PC-9 (cell line): ENCODE measurements at regions of chr9 and their contacts with region 1.

Region 1: DNA sequence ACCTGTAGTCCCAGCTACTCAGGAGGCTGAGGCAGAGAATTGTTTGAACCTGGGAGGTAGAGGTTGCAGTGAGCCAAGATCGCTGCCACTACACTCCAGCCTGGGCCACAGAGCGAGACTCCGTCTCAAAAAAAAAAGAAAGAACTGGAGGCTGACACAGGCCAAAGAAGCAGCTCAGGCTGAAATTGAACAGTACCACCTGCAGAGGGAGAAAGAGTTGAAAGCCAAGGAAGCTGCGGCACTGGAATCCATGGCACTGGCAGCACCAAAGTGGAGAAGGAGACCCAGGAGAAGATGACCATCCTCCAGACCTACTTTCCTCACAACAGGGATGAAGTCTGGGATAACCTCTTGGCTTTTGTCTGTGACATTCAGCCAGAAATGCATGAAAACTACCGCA is 11.3 kb upstream of the TMEM141 start:
- DNase-seq: no peak
- H3K4me3 ChIP-seq: no peak overlapping the region
- H3K27ac ChIP-seq: no peak overlapping the region
- H3K4me1 ChIP-seq: no peaks in the 10 kb centered on the region
- H3K27me3 ChIP-seq: peaks cover 42% of the 10 kb centered on the region
- CTCF ChIP-seq: no peak; the same call in 1 of the 2 replicates

Region 2: DNA sequence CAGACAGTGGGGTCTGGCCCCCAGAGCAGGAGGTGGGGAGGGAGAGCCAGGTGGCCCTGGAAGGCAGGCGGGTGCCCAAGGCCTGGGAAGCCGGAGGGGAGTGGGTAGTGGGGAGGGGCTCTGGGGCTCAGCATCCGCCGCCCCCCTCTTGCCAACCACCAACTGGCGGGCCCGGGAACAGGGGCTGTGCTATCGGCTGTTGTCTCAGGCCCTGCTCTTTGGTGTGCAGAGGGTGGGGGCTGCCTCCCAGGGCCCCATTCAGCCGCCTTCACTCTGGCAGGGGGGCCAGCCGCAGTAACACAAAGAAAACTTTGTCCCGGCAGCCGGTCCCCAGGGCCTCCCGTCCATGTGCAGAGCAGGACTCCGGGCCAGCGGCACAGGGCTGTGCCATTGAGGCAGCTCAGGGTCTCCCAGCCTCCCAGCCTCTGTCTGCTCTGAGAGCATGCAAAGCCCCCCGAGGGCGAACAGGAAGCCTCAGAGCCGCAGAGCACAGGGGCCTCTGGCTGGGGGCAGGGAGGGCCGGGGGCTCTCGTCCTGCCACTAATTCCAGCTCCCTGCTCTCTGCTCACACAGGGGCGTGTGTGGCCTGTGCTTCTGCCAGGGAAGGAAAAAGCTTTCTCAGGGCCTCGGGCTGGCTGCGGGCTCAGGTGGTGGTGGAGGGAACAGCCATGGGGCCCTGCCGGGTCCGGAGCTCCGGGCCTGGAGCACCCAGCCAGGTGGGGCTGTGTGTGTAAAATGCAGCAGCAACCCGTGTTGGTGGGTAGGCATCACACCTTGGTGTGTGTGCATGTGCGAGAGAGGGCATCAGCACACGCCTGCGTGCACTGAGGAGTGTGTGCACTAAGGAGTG is 179.8 kb before region 1 on chr9:
- CTCF ChIA-PET with region 1: no interaction called
- POLR2A ChIA-PET with region 1: no interaction called
- intact Hi-C with region 1: no loop called
- DNase-seq: no peak
- H3K4me3 ChIP-seq: no peak overlapping the region
- H3K27ac ChIP-seq: no peak overlapping the region
- H3K4me1 ChIP-seq: peaks cover 6% of the 10 kb centered on the region; the same call in 1 of the 2 replicates
- H3K27me3 ChIP-seq: peaks cover 21% of the 10 kb centered on the region
- CTCF ChIP-seq: no peak

Region 3: DNA sequence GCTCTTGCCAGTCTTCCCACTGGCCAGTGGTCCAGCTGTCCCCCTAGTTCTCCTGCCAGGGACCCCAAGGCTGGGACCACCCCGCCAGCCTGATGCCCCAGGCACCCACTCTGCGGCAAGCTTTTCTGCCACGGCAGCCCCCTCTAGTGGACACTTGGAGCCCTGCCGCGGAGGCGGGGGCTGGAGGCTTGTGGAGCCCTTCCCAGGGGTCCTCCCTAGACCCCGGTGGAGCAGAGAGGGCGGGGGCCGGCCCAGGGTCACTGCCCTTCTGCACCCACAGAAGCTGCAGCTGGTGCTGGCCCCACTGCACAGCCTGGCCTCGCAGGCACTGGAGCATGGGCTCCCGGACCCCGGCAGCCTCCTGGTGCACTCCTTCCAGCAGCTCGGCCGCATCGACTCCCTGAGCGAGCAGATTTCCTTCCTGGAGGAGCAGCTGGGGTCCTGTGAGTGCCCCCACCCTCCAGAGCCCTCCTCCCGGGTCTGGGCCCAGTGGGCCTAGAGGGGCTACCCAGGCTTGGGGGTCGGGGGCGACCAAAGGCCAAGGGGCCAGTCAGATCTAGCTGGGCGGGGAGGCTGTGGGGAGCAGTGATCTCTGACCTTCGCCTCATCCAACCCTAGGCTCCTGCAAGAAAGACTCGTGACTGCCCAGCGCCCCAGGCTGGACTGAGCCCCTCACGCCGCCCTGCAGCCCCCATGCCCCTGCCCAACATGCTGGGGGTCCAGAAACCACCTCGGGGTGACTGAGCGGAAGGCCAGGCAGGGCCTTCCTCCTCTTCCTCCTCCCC is 108.0 kb before region 1 on chr9:
- CTCF ChIA-PET with region 1: no interaction called
- POLR2A ChIA-PET with region 1: no interaction called
- intact Hi-C with region 1: no loop called
- DNase-seq: peak in 1 of 2 experiments; percentile 46
- H3K4me3 ChIP-seq: no peak overlapping the region
- H3K27ac ChIP-seq: no peak overlapping the region
- H3K4me1 ChIP-seq: no peaks in the 10 kb centered on the region
- H3K27me3 ChIP-seq: no peaks in the 10 kb centered on the region
- CTCF ChIP-seq: peak; percentile 87

Region 4: GRCh38 chr9:136720251-136720886 is 59.4 kb before region 1 on chr9:
- CTCF ChIA-PET with region 1: no interaction called
- POLR2A ChIA-PET with region 1: no interaction called
- intact Hi-C with region 1: no loop called
- DNase-seq: no peak
- H3K4me3 ChIP-seq: no peak overlapping the region
- H3K27ac ChIP-seq: no peak overlapping the region
- H3K4me1 ChIP-seq: peaks cover 2% of the 10 kb centered on the region
- H3K27me3 ChIP-seq: no peaks in the 10 kb centered on the region
- CTCF ChIP-seq: no peak

Region 5: DNA sequence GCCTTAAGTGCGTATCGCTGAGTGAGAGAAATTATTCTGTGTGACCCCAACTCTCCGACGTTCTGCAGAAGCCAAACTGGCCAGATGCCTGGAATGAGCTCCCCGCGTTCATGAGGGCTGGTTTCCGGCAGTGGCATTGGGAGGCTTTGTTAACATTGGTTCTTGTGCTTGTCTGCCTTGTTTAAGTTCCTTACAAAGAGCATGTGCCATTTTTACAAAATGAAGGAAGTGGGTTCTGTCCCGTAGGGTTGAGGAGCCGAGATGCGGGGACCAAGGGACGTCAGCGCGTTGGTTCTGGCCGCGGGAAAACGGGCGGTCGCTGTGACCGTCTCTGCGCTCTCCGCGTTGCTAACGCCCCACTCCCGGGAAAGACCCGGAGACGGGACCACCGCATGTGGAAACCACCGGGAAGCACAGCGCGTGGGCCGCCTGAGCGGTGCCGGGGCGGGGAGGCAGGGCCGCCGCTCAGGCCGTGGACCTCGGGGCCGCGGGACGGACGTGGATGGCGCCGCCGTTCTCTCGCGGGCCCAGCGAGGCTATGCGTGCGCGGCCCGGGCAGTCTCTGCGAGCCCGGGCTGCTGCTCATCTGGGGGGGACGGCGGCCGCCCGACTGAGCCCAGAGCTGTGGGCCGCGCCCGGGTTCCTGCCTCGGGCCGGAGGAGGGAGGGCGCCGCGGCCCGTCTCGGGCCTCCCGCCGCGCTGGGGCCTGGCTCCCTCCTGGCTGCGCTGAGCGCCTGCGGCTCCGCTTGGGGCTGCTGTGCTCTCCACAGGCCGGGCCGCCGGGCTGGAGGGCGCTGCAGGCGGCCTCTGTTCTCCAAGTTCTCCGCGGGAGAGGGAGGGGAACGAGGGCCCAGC is 41.4 kb after region 1 on chr9:
- CTCF ChIA-PET with region 1: interaction called, 13 read pairs
- POLR2A ChIA-PET with region 1: no interaction called
- intact Hi-C with region 1: no loop called
- DNase-seq: no peak
- H3K4me3 ChIP-seq: no peak overlapping the region
- H3K27ac ChIP-seq: no peak overlapping the region
- H3K4me1 ChIP-seq: no peaks in the 10 kb centered on the region
- H3K27me3 ChIP-seq: no peaks in the 10 kb centered on the region
- CTCF ChIP-seq: no peak

Region 6: GRCh38 chr9:136910901-136911245 is 131.1 kb after region 1 on chr9:
- CTCF ChIA-PET with region 1: interaction called, 20 read pairs
- POLR2A ChIA-PET with region 1: no interaction called
- intact Hi-C with region 1: no loop called
- DNase-seq: no peak
- H3K4me3 ChIP-seq: no peak overlapping the region
- H3K27ac ChIP-seq: no peak overlapping the region
- H3K4me1 ChIP-seq: no peaks in the 10 kb centered on the region
- H3K27me3 ChIP-seq: no peaks in the 10 kb centered on the region
- CTCF ChIP-seq: no peak

Region 7: DNA sequence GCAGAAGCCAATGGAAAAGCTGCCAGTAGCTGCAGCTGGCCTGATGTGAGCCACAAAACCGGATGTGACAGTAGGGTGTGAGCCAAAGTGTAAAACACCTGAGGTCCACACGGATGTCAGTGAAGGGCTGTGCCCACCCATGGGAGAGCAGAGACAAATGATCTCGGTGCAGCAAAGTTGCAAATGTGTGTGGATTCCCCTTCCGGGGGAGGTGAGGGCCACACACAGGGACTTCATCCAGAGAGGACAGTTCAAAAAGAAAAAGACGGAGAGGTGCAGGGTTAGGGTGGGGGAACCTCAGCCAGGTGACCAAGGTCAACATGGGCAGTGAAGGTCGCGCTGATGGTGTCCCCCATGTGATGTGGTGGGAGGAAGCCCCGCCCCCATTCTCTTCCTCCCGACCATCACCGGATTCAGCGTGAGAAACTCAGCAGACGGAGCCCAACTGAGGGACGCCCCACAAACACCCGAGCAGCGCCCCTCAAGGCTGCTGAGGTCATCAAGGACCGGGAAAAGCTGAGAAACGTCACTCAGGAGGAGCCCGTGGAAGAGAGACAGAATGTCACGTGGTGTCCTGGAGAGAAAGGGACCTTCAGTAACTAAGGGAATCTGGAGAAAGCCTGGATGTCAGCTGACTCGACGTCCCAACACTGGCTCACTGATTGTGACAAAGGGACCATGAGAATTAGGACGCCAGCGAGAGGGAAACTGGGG is 186.1 kb after region 1 on chr9:
- CTCF ChIA-PET with region 1: no interaction called
- POLR2A ChIA-PET with region 1: no interaction called
- intact Hi-C with region 1: no loop called
- DNase-seq: no peak
- H3K4me3 ChIP-seq: no peak overlapping the region
- H3K27ac ChIP-seq: no peak overlapping the region
- H3K4me1 ChIP-seq: peaks cover 10% of the 10 kb centered on the region
- H3K27me3 ChIP-seq: no peaks in the 10 kb centered on the region
- CTCF ChIP-seq: no peak